Psoas muscle (tissue), 8 donors: ENCODE measurements at regions of chr12 and their contacts with region 1.

Region 1: DNA sequence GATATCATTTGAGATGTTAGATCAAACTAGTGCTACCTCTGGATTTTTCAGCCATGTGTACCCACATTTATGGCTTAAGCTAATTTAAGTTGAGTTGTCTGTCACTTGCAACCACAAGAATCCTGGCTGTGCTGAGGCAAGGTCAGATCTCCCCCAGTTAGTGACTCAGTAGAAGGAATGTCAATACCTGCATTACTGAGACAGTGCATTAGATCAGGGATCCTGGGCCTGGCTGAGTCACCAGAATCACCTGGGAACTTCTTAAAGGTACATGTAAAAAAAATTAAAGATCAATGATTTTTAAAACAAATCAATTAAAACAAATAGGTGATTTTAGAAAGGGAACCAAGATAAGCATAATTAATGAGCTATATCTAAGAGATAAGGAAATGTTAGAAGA is 84.6 kb upstream of the GRIN2B start:
- DNase-seq: no peak
- ATAC-seq: no peak
- H3K4me3 ChIP-seq: no peak overlapping the region
- H3K27ac ChIP-seq: no peak overlapping the region
- H3K4me1 ChIP-seq: no peaks in the 10 kb centered on the region
- H3K27me3 ChIP-seq: no peaks in the 10 kb centered on the region
- CTCF ChIP-seq: no peak

Region 2: GRCh38 chr12:13523536-13524307 is 542.3 kb before region 1 on chr12:
- intact Hi-C with region 1: no loop called
- DNase-seq: no peak
- ATAC-seq: no peak
- H3K4me3 ChIP-seq: no peak overlapping the region
- H3K27ac ChIP-seq: no peak overlapping the region
- H3K4me1 ChIP-seq: no peaks in the 10 kb centered on the region
- H3K27me3 ChIP-seq: no peaks in the 10 kb centered on the region
- CTCF ChIP-seq: no peak

Region 3: DNA sequence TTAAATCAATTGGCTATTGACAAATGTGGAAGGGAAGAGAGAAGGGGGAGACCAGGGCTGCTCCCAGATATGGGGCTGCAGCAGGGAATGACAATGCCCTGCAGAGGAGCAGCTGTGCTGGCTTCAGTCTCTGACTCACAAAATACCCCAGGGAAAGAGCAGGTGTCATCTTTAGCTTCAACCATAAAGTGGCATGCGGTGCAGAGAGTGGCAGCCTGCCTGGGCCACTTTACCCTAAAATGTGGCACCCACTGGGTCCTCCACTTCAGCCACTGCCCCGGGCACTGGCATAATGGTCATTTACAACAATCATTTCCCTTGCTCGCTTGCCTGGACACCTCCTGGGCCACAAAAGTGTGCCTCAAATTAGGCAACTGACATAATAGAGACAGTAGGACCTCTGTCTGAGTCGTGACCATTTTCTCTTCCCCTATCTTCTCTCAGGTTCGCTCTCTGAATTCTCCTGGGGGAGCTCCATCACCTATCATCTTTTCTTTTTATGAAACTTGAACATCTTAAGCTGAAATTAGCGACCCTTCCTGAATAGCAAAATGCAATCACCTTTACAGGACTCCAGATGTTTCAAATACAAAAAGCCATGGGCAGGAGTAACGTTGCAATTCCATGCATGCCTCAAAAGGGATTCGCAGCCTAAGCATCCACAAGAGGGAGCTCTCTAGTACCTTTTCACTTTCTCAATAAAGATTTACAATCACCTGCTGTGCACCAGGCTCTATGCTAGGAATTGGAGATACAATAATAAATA is 119.6 kb after region 1 on chr12:
- intact Hi-C with region 1: no loop called
- DNase-seq: no peak
- ATAC-seq: peak in 1 of 4 donors; percentile 47
- H3K4me3 ChIP-seq: no peak overlapping the region
- H3K27ac ChIP-seq: no peak overlapping the region
- H3K4me1 ChIP-seq: no peaks in the 10 kb centered on the region
- H3K27me3 ChIP-seq: no peaks in the 10 kb centered on the region
- CTCF ChIP-seq: peak; percentile 42

Region 4: GRCh38 chr12:14249368-14249767 is 183.3 kb after region 1 on chr12:
- intact Hi-C with region 1: no loop called
- DNase-seq: no peak
- ATAC-seq: no peak
- H3K4me3 ChIP-seq: no peak overlapping the region
- H3K27ac ChIP-seq: no peak overlapping the region
- H3K4me1 ChIP-seq: no peaks in the 10 kb centered on the region
- H3K27me3 ChIP-seq: no peaks in the 10 kb centered on the region
- CTCF ChIP-seq: no peak

Region 5: DNA sequence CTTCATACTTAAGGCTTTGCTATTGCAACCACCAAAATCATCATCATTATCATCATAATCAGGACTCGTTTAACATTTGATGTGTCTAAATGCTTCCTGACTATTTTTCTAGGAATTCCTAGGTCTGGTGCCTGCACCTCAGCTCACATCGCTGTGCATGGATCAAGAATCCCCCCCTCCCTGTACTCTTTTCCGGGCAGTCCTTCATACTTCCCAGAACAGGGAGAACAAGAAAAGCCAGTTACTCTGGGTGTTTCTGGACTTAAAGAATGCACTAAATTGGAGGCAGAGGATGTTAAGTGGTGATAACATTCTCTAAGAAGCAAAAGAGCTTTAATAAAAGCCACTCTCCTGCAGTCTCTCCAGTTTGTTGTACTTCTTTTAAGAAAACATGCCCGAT is 862.9 kb after region 1 on chr12:
- intact Hi-C with region 1: loop called in 1 of 2 experiments (anchors 10 kb)
- DNase-seq: no peak
- ATAC-seq: no peak
- H3K4me3 ChIP-seq: no peak overlapping the region
- H3K27ac ChIP-seq: no peak overlapping the region
- H3K4me1 ChIP-seq: no peaks in the 10 kb centered on the region
- H3K27me3 ChIP-seq: no peaks in the 10 kb centered on the region
- CTCF ChIP-seq: no peak